Heart right ventricle (tissue), 16 donors: ENCODE measurements at regions of chrX and their contacts with region 1.

Region 1: GRCh38 chrX:455199-455598 is 68.5 kb upstream of the PPP2R3B start:
- DNase-seq: no peak
- ATAC-seq: no peak
- H3K4me3 ChIP-seq: no peak overlapping the region
- H3K27ac ChIP-seq: no peak overlapping the region
- H3K4me1 ChIP-seq: no peaks in the 10 kb centered on the region
- H3K27me3 ChIP-seq: peaks cover 0 to 11% (median 0%) of the 10 kb centered on the region in 7 donors
- CTCF ChIP-seq: no peak

Region 2: DNA sequence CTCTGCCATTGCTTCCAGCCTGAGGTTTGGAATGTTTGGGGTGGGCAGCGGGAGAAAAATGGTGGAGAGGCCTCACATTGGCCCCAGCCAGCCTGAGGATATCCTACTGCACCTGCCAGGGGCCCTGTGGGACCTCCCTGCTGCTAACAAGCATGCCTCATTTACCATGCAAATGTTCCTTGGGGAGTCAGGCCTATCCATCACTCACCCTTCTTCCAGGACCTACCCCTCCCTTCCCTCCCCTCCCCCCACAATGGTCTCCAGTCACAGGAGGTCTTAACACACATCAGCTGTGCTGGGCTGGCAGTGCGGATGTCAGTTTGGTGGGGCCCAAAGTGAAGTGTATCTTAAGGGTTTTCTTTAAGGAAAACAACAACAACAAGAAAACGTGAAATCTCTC is 314.6 kb after region 1 on chrX:
- intact Hi-C with region 1: loop called in 1 of 10 experiments (anchors 10 kb)
- DNase-seq: no peak
- ATAC-seq: no peak
- H3K4me3 ChIP-seq: no peak overlapping the region
- H3K27ac ChIP-seq: no peak overlapping the region
- H3K4me1 ChIP-seq: no peaks in the 10 kb centered on the region
- H3K27me3 ChIP-seq: peaks cover 0 to 6% (median 0%) of the 10 kb centered on the region in 7 donors
- CTCF ChIP-seq: no peak